ENCODE measurements at regions of chr13 and their contacts with region 1.

Region 1: GRCh38 chr13:73058736-73059459 is at the start of gene KLF5:
- H3K4me3 Mint-ChIP-seq: peak within 1 kb of the TSS; percentile 76
- H3K27ac Mint-ChIP-seq: peak within 1 kb of the TSS; percentile 48
- H3K4me1 Mint-ChIP-seq: peaks cover 18% of the 10 kb centered on the region
- H3K27me3 Mint-ChIP-seq: peaks cover 47% of the 10 kb centered on the region

Region 2: GRCh38 chr13:72781451-72782439 is 277.2 kb before region 1 on chr13 and contains the starts of genes DIS3 and PIBF1:
- intact Hi-C with region 1: loop called (anchors 5 kb)
- H3K4me3 Mint-ChIP-seq: peak within 1 kb of the TSS; percentile 98
- H3K27ac Mint-ChIP-seq: peak within 1 kb of the TSS; percentile 96
- H3K4me1 Mint-ChIP-seq: peaks cover 38% of the 10 kb centered on the region
- H3K27me3 Mint-ChIP-seq: no peaks in the 10 kb centered on the region

Region 3: GRCh38 chr13:73228546-73228945 is 169.6 kb after region 1 on chr13:
- intact Hi-C with region 1: no loop called
- H3K4me3 Mint-ChIP-seq: no peak overlapping the region
- H3K27ac Mint-ChIP-seq: no peak overlapping the region
- H3K4me1 Mint-ChIP-seq: peaks cover 36% of the 10 kb centered on the region
- H3K27me3 Mint-ChIP-seq: no peaks in the 10 kb centered on the region

Measured in dendritic cell treated with granulocyte-macrophage colony-stimulating factor and Interleukin-4, amounts not matched to agents 40 ng/mL and 50 ng/mL, for 4 days (primary cell).